Dendritic cell treated with granulocyte-macrophage colony-stimulating factor and Interleukin-4, amounts not matched to agents 40 ng/mL and 50 ng/mL, for 4 days (primary cell): ENCODE measurements at regions of chr9 and their contacts with region 1.

Region 1: DNA sequence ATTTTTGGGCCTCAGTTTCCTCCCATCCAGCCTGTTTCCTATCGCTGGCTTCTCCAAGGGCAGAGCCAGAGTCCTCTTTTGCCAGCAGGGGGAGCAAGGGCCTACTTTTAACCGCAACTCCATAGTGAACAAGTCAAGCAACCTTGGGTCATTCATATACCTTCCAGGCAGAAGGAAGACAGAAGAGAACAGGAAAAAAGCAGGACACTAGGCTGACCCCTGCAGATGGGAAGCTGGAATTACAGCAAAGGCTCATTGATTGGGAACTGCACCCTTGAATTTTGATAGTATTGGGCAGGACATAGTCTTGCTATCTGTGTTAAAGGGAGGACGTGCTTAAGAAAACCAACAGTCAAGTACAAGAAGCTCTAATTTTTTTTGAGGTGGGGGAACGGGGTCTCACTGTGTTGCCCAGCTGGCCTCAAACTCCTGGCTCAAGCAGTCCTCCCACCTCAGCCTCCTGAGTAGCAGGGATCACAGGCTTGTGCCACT is 30.1 kb downstream of the QRFP start:
- H3K4me3 Mint-ChIP-seq: no peak overlapping the region
- H3K27ac Mint-ChIP-seq: no peak overlapping the region
- H3K4me1 Mint-ChIP-seq: peaks cover 5% of the 10 kb centered on the region
- H3K27me3 Mint-ChIP-seq: no peaks in the 10 kb centered on the region

Region 2: GRCh38 chr9:130701056-130702022 is 165.2 kb before region 1 on chr9:
- intact Hi-C with region 1: loop called (anchors 1 kb)
- H3K4me3 Mint-ChIP-seq: no peak overlapping the region
- H3K27ac Mint-ChIP-seq: no peak overlapping the region
- H3K4me1 Mint-ChIP-seq: peaks cover 23% of the 10 kb centered on the region
- H3K27me3 Mint-ChIP-seq: no peaks in the 10 kb centered on the region

Region 3: GRCh38 chr9:130707225-130707976 is 159.1 kb before region 1 on chr9:
- intact Hi-C with region 1: loop called (anchors 2 kb)
- H3K4me3 Mint-ChIP-seq: no peak overlapping the region
- H3K27ac Mint-ChIP-seq: no peak overlapping the region
- H3K4me1 Mint-ChIP-seq: peaks cover 3% of the 10 kb centered on the region
- H3K27me3 Mint-ChIP-seq: peaks cover 7% of the 10 kb centered on the region

Region 4: DNA sequence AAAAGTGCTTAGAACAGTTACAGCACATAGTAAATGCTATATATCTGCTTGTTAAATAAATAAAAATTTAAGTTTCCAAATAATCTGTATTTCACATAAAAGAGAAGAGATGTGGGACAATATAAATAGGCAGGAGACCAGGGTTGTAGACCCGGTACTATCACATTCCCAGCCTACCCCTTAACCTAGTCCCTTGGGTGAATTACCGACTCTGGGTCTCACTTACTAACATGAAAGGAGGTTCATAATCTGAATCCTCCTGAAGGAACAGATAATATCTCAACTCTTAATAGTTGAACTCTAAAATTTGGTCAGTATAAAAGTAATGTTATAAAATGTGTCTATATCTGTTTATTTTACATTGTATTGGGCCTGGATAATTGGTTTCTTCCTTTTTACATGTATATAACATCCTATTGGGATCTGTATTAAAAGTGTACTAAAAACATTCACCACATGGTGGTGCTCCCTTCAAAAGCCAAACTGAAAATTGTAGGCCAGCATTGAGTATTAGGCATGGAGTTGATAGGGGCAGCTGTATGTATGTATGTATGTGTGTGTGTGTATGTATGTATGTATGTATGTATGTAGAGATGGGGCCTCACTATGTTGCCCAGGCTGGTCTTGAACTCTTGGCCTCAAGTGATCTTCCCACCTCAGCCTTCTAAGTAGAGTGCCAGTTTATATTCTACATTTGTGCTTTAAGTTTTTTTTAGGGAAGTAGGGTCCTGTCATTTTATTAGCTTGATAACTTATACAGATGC is 95.7 kb before region 1 on chr9:
- intact Hi-C with region 1: loop called (anchors 2 kb)
- H3K4me3 Mint-ChIP-seq: no peak overlapping the region
- H3K27ac Mint-ChIP-seq: no peak overlapping the region
- H3K4me1 Mint-ChIP-seq: peaks cover 47% of the 10 kb centered on the region
- H3K27me3 Mint-ChIP-seq: no peaks in the 10 kb centered on the region

Region 5: DNA sequence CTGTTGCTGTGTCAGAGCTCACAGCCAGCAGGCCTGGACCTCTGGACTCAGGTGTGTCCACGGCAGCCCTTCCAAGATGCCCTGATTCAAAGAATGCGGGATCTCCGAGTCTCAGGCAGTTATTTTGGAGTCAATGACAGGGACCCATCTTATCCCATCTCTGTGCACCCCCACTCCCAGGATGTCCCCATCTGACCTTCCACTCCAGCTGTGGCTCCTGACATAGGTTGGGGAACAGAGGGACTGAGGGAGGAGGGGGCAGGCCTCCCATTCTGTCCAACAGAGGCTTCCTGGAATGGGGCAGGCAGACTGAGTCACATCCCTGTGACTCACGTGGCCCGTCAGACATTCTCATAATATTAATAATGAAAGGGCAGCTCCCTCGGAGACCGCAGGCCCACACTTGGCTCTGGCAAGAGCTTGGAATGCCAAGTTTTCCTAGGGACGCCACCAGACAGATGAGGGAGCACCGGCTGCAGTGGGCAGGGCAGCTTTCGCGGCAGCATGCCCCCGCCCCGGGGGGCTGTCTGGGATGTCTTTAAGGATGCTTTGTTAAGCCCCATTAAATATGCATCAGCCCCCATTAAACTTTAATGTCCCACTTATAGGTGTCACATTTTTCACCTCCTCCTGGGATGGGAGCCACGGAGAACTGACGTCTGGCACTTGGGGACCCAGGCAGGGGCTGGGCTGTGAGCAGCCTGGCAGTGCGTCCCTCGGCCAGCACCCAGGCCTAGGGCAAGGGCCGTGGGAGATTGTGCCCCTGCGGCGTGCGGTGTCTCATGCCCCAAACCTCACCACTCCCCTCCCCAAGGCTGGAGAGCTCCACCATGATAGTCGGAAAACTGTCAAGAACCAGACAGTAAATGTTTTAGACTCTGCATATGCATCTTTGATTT is 96.1 kb after region 1 on chr9:
- intact Hi-C with region 1: no loop called
- H3K4me3 Mint-ChIP-seq: no peak overlapping the region
- H3K27ac Mint-ChIP-seq: no peak overlapping the region
- H3K4me1 Mint-ChIP-seq: no peaks in the 10 kb centered on the region
- H3K27me3 Mint-ChIP-seq: peaks cover 2% of the 10 kb centered on the region

Region 6: GRCh38 chr9:130997925-130998596 is 131.5 kb after region 1 on chr9:
- intact Hi-C with region 1: loop called (anchors 1 kb)
- H3K4me3 Mint-ChIP-seq: no peak overlapping the region
- H3K27ac Mint-ChIP-seq: no peak overlapping the region
- H3K4me1 Mint-ChIP-seq: peaks cover 9% of the 10 kb centered on the region
- H3K27me3 Mint-ChIP-seq: peaks cover 9% of the 10 kb centered on the region

Region 7: DNA sequence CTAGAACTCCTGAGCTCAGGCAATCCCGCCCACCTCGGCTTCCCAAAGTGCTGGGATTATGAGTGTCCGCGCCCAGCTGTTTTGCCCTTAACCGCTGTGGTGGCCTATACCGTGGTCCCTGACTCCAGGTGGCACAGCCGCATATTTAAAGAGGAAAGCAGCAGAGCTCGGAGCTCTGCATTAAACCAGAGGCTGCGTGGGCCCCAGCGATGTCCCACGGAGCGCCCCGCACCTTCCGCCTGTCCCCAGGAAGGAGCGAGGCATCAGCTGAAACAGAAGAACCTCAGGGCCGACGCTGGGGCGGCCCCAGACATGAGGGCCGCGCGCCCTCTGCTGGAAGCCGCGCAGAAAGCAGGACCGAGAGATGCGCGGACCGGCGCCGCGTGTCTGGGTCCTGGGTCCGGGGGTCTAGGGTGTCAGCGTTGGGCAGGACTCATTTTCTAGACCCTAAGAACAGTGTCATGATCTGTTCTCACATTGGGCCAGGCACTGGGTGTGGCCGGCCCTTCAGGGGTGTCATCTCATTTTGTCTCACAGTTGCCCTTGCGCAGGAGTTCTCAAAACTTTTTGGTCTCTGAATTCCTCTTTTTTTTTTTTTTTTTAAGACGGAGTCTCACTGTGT is 180.2 kb after region 1 on chr9:
- intact Hi-C with region 1: loop called (anchors 2 kb)
- H3K4me3 Mint-ChIP-seq: peak overlapping the region; percentile 48
- H3K27ac Mint-ChIP-seq: no peak overlapping the region
- H3K4me1 Mint-ChIP-seq: peaks cover 6% of the 10 kb centered on the region
- H3K27me3 Mint-ChIP-seq: peaks cover 5% of the 10 kb centered on the region